ENCODE measurements at regions of chr16 and their contacts with region 1.

Region 1: GRCh38 chr16:19595043-19595767 is 39.7 kb downstream of the VPS35L start:
- DNase-seq: no peak
- ATAC-seq: no peak
- H3K4me3 Mint-ChIP-seq: no peak overlapping the region
- H3K27ac Mint-ChIP-seq: no peak overlapping the region
- H3K4me1 Mint-ChIP-seq: no peaks in the 10 kb centered on the region
- H3K27me3 Mint-ChIP-seq: no peaks in the 10 kb centered on the region

Region 2: DNA sequence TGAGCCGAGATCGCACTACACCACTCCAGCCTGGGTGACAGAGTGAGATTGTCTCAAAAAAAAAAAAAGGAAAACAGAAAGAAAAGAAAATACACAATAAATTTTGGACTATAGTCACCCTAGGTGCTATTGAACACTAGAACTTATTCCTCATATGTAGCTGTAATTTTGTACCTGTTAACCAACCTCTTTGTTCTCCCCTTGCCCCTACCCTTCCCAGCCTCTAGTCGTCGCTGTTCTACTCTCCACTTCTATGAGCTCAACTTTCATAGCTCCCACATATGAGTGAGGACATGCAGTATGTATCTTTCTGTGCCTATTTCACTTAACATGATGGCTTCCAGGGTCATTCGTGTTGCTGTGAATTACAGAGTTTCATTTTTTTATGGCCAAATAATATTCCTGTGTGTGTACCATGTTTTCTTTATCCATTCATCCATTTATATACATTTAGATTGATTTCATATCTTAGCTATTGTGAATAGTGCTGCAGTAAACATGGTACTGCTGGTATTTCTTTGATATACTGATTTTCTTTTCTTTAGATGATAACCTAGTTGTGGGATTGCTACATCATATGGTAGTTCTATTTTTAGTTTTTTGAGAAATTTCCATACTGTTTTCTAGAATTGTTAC is 11.4 kb before region 1 on chr16:
- CTCF ChIA-PET with region 1: interaction called, 12 read pairs
- DNase-seq: peak; percentile 44
- ATAC-seq: peak; percentile 57
- H3K4me3 Mint-ChIP-seq: no peak overlapping the region
- H3K27ac Mint-ChIP-seq: no peak overlapping the region
- H3K4me1 Mint-ChIP-seq: no peaks in the 10 kb centered on the region
- H3K27me3 Mint-ChIP-seq: no peaks in the 10 kb centered on the region

Region 3: GRCh38 chr16:19876501-19877059 is 281.4 kb after region 1 on chr16:
- CTCF ChIA-PET with region 1: no interaction called
- DNase-seq: no peak
- ATAC-seq: no peak
- H3K4me3 Mint-ChIP-seq: no peak overlapping the region
- H3K27ac Mint-ChIP-seq: no peak overlapping the region
- H3K4me1 Mint-ChIP-seq: no peaks in the 10 kb centered on the region
- H3K27me3 Mint-ChIP-seq: peaks cover 17% of the 10 kb centered on the region